ENCODE measurements at regions of chr14 and their contacts with region 1.

Region 1: GRCh38 chr14:102063091-102063802 is 23.6 kb downstream of the HSP90AA1 start:
- DNase-seq: peak; percentile 81
- ATAC-seq: peak; percentile 95
- H3K4me3 Mint-ChIP-seq: no peak overlapping the region
- H3K27ac Mint-ChIP-seq: no peak overlapping the region
- H3K4me1 Mint-ChIP-seq: peaks cover 8% of the 10 kb centered on the region
- H3K27me3 Mint-ChIP-seq: peaks cover 3% of the 10 kb centered on the region

Region 2: GRCh38 chr14:102096214-102097114 is 33.2 kb after region 1 on chr14:
- CTCF ChIA-PET with region 1: interaction called, 32 read pairs
- POLR2A ChIA-PET with region 1: no interaction called
- DNase-seq: peak; percentile 74
- ATAC-seq: peak; percentile 82
- H3K4me3 Mint-ChIP-seq: no peak overlapping the region
- H3K27ac Mint-ChIP-seq: no peak overlapping the region
- H3K4me1 Mint-ChIP-seq: peaks cover 9% of the 10 kb centered on the region
- H3K27me3 Mint-ChIP-seq: no peaks in the 10 kb centered on the region

Measured in activated CD8-positive, alpha-beta T cell treated with anti-CD3 and anti-CD28 coated beads, Interleukin-2, amount 10 ng/mL, durations not matched to agents 7 days and 5 days (primary cell).